Naive thymus-derived CD4-positive, alpha-beta T cell (primary cell): ENCODE measurements at regions of chr2 and their contacts with region 1.

Region 1: DNA sequence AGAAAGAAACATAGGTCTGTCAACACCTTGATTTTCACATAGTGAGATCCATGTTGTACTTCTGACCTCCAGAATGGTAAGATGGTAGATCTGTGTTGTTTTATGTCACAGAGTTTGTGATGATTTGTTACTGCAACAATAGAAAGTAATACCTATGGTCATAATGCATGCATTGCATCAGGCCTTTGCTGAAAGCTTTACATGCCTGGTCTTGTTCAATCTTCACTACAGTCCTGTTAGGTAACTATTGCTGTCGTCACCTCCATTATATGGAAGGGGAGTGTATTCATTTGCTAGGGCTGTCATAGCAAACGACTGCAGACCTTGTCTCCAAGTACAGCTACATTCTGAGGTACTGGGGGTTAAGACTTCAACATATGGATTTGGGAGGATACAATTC is 243.5 kb downstream of the ANAPC1 start:
- DNase-seq: no peak
- ATAC-seq: no peak
- H3K4me3 ChIP-seq: no peak overlapping the region
- H3K4me3 Mint-ChIP-seq: no peak overlapping the region
- H3K27ac ChIP-seq: no peak overlapping the region
- H3K27ac Mint-ChIP-seq: no peak overlapping the region
- H3K4me1 ChIP-seq: no peaks in the 10 kb centered on the region
- H3K4me1 Mint-ChIP-seq: peaks cover 0 to 8% (median 0%) of the 10 kb centered on the region in 7 donors
- H3K27me3 ChIP-seq: no peaks in the 10 kb centered on the region
- H3K27me3 Mint-ChIP-seq: peaks cover 6 to 37% (median 9%) of the 10 kb centered on the region in 5 donors

Region 2: GRCh38 chr2:111148925-111149324 is 491.6 kb before region 1 on chr2:
- CTCF ChIA-PET with region 1: no interaction called
- POLR2A ChIA-PET with region 1: no interaction called
- intact Hi-C with region 1: no loop called
- DNase-seq: no peak
- ATAC-seq: no peak
- H3K4me3 ChIP-seq: no peak overlapping the region
- H3K4me3 Mint-ChIP-seq: no peak overlapping the region
- H3K27ac ChIP-seq: no peak overlapping the region
- H3K27ac Mint-ChIP-seq: peak overlapping the region in 4 of 9 donors; percentile 6 to 57 (median 32)
- H3K4me1 ChIP-seq: no peaks in the 10 kb centered on the region
- H3K4me1 Mint-ChIP-seq: peaks cover 6 to 28% (median 21%) of the 10 kb centered on the region in 7 donors
- H3K27me3 ChIP-seq: no peaks in the 10 kb centered on the region
- H3K27me3 Mint-ChIP-seq: no peaks in the 10 kb centered on the region

Region 3: GRCh38 chr2:111620281-111620680 is 20.2 kb before region 1 on chr2:
- CTCF ChIA-PET with region 1: no interaction called
- POLR2A ChIA-PET with region 1: no interaction called
- intact Hi-C with region 1: loop called in 1 of 2 experiments (anchors 2 kb)
- DNase-seq: no peak
- ATAC-seq: no peak
- H3K4me3 ChIP-seq: no peak overlapping the region
- H3K4me3 Mint-ChIP-seq: no peak overlapping the region
- H3K27ac ChIP-seq: no peak overlapping the region
- H3K27ac Mint-ChIP-seq: no peak overlapping the region
- H3K4me1 ChIP-seq: no peaks in the 10 kb centered on the region
- H3K4me1 Mint-ChIP-seq: peaks cover 0 to 34% (median 0%) of the 10 kb centered on the region in 7 donors
- H3K27me3 ChIP-seq: no peaks in the 10 kb centered on the region
- H3K27me3 Mint-ChIP-seq: peaks cover 0 to 16% (median 7%) of the 10 kb centered on the region in 5 donors

Region 4: GRCh38 chr2:111652038-111652437 is 11.6 kb after region 1 on chr2:
- CTCF ChIA-PET with region 1: no interaction called
- POLR2A ChIA-PET with region 1: no interaction called
- intact Hi-C with region 1: no loop called
- DNase-seq: no peak
- ATAC-seq: no peak
- H3K4me3 ChIP-seq: no peak overlapping the region
- H3K4me3 Mint-ChIP-seq: no peak overlapping the region
- H3K27ac ChIP-seq: no peak overlapping the region
- H3K27ac Mint-ChIP-seq: no peak overlapping the region
- H3K4me1 ChIP-seq: no peaks in the 10 kb centered on the region
- H3K4me1 Mint-ChIP-seq: peaks cover 0 to 4% (median 0%) of the 10 kb centered on the region in 7 donors
- H3K27me3 ChIP-seq: no peaks in the 10 kb centered on the region
- H3K27me3 Mint-ChIP-seq: peaks cover 0 to 55% (median 0%) of the 10 kb centered on the region in 5 donors

Region 5: DNA sequence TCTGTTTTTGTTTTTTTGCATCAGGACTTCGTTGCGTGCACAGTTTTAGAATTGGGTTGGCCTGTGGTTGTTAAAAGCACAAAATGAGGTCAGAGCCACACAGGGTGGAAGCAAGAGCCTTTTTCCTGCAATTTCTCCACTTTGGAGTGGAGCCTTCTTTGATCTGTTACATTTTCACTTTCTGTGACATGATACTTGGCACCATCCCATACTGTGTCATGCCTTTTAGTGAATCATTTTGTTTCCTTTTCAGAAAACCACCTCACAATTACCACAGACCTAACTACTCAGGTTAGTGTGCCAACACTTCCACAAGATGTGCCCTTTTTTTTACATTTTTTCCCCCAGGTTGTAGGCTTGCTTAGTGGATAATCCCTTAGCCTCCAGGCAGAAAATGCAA is 290.4 kb after region 1 on chr2:
- CTCF ChIA-PET with region 1: no interaction called
- POLR2A ChIA-PET with region 1: no interaction called
- intact Hi-C with region 1: no loop called
- DNase-seq: no peak
- ATAC-seq: no peak
- H3K4me3 ChIP-seq: no peak overlapping the region
- H3K4me3 Mint-ChIP-seq: peak overlapping the region in 1 of 10 donors; percentile 41
- H3K27ac ChIP-seq: no peak overlapping the region
- H3K27ac Mint-ChIP-seq: peak overlapping the region in 1 of 9 donors; percentile 78
- H3K4me1 ChIP-seq: no peaks in the 10 kb centered on the region
- H3K4me1 Mint-ChIP-seq: peaks cover 0 to 15% (median 0%) of the 10 kb centered on the region in 7 donors
- H3K27me3 ChIP-seq: no peaks in the 10 kb centered on the region
- H3K27me3 Mint-ChIP-seq: peaks cover 0 to 26% (median 0%) of the 10 kb centered on the region in 5 donors